GM23248 (cell line): ENCODE measurements at regions of chr12 and their contacts with region 1.

Region 1: DNA sequence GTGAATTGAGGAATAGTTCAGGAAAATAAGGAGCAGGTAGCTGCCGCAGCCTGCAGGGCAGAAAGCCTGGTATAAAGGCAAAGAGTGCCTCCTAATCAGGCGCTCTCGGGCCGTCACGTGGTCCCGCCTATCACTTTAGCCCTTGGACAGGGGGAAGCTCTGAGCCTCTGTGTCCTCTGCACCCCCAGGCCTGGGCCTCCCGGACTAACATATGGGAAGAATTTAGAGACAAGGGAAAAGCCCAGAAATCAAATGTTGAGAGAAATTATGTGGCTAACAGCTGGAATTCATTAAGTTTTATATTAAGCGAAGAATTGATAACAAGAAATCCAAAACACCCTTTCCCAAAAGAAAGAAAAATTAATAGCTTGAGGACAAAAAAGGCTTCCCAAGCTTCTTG is 417.7 kb downstream of the ATP23 start:
- DNase-seq: peak; percentile 24
- H3K4me3 ChIP-seq: no peak overlapping the region
- H3K27ac ChIP-seq: no peak overlapping the region
- H3K4me1 ChIP-seq: peaks cover 17% of the 10 kb centered on the region
- H3K27me3 ChIP-seq: no peaks in the 10 kb centered on the region

Region 2: GRCh38 chr12:58529897-58530741 is 171.0 kb after region 1 on chr12:
- in situ Hi-C with region 1: loop called (anchors 10 kb)
- DNase-seq: peak; percentile 94
- H3K4me3 ChIP-seq: peak overlapping the region; percentile 64
- H3K27ac ChIP-seq: peak overlapping the region; percentile 84
- H3K4me1 ChIP-seq: peaks cover 46% of the 10 kb centered on the region
- H3K27me3 ChIP-seq: no peaks in the 10 kb centered on the region